HEK293T (cell line): ENCODE measurements at regions of chr11 and their contacts with region 1.

Region 1: GRCh38 chr11:82867495-82868082 is 32.6 kb downstream of the PRCP start:
- DNase-seq: peak; percentile 62

Region 2: DNA sequence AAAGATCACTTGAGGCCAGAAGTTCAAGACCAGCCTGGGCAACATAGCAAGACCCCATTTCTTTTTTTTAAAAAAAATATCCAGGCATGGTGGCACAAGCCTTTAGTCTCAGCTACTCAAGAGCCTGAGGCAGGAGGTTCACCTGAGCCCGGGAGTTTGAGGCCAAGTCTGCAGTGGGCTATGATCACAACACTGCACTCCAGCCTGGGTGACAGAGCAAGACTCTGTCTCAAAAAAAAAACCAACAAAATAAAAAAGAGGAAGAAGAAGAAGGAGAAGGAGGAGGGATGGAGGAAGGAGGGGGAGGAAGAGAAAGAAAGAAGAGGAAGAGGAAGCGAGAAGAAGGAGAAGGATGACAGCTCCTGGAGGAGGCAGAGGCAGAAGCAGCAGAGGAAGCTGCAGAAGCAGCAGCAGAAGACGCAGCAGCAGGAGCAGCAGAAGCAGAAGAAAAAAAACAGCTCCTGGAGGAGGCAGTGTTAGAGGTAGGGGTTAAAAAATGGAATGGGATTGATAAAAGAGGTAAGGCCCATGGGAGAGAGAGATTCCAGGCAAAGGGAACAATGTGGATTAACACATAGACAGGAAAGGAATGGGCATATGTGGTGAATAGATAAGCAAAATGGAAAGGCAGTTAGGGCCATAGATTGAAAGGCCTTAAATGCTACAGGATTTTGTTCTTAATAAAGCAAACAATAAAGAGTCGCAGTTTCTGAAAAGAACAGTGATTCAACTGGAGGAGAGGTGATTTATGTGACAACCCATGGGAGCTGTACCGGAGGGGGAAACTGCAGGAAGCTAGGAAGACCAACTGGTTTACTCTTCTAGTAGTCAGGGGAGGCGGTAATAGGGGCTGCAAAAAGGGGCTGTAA is 21.8 kb after region 1 on chr11:
- CTCF ChIA-PET with region 1: interaction called, 14 read pairs
- POLR2A ChIA-PET with region 1: no interaction called
- DNase-seq: no peak

Region 3: DNA sequence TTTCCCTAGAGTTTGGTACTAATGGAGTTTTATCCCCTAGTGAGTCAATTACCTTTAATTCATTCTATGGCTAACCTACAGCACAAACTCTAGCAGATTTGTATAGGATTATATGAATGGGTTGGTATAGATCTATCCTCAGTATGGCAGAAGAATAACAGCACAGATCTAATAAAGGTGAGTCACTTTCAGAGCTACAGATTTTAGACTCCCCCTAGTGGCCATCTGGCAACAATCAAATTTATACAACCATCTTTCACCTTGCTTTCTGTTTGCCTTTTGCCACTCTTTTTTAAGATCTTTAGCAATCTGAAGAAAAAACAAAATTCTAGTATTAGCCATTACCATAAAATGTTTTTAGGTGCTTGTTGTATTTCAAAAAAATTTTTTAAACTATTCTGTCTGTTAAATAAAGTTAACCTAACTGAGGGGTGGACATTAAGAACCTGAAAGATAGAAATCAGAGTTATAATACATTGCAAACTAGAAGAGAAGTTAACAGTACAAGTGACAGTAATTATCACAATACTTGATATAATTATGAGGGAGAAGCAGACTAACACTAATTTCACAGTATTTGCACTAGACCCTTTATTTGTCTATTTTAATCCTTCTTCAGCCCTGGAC is 59.8 kb after region 1 on chr11:
- CTCF ChIA-PET with region 1: interaction called, 15 read pairs
- POLR2A ChIA-PET with region 1: no interaction called
- DNase-seq: peak; percentile 51

Region 4: DNA sequence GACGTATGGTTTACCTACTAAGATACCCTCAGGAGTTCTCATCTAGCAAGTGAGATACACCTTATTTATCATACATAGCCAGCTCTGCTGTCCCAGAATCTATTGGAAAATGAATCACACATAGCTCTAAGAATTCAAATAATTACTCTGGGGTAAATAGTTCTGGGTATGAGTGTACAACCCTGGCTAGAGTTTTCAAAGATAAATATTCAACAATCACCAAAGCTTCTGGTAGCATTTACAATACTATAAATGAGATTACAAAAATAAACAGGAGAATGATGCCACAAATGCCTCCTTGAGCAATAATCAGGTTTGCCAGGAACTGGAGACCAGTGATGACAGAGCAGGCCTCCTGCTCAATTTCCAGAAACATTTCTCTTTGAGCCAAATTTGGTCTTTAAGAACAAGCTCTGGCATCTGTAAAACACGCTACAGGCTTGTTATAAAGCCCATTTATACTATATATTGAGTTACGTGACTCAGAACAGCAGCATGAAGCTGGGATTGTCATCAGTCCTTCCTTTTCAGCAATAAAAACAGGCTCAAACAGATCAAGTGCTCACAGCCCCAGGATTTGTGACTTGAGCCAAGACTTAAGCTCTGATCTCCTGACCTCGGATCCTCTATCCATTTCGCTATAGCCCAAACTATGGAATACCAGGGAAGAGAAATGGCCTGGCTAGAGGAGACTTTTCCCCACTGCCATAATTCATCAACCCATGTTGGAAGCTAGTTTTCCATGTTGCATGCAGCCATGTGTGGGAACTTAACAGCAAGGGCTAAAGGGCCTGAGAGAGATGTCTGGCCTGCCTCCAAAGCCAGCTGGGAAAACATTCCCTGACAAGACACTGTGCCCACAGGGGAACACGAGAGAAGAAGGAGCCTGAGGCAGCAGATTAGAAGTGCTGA is 184.4 kb after region 1 on chr11:
- CTCF ChIA-PET with region 1: no interaction called
- POLR2A ChIA-PET with region 1: no interaction called
- DNase-seq: no peak